Natural killer cell (primary cell): ENCODE measurements at regions of chr1 and their contacts with region 1.

Region 1: GRCh38 chr1:27357281-27358037 is 9.3 kb downstream of the MAP3K6 start:
- DNase-seq: peak; percentile 81 to 91
- ATAC-seq: peak; percentile 70 to 91 (median 75)
- H3K4me3 ChIP-seq: peak overlapping the region; percentile 61
- H3K4me3 Mint-ChIP-seq: peak overlapping the region; percentile 77
- H3K27ac ChIP-seq: peak overlapping the region; percentile 74
- H3K27ac Mint-ChIP-seq: peak overlapping the region; percentile 78 to 84
- H3K4me1 ChIP-seq: peaks cover 50% of the 10 kb centered on the region
- H3K4me1 Mint-ChIP-seq: peaks cover 25 to 41% of the 10 kb centered on the region in 2 donors
- H3K27me3 ChIP-seq: no peaks in the 10 kb centered on the region
- H3K27me3 Mint-ChIP-seq: no peaks in the 10 kb centered on the region
- CTCF ChIP-seq: peak; percentile 99

Region 2: DNA sequence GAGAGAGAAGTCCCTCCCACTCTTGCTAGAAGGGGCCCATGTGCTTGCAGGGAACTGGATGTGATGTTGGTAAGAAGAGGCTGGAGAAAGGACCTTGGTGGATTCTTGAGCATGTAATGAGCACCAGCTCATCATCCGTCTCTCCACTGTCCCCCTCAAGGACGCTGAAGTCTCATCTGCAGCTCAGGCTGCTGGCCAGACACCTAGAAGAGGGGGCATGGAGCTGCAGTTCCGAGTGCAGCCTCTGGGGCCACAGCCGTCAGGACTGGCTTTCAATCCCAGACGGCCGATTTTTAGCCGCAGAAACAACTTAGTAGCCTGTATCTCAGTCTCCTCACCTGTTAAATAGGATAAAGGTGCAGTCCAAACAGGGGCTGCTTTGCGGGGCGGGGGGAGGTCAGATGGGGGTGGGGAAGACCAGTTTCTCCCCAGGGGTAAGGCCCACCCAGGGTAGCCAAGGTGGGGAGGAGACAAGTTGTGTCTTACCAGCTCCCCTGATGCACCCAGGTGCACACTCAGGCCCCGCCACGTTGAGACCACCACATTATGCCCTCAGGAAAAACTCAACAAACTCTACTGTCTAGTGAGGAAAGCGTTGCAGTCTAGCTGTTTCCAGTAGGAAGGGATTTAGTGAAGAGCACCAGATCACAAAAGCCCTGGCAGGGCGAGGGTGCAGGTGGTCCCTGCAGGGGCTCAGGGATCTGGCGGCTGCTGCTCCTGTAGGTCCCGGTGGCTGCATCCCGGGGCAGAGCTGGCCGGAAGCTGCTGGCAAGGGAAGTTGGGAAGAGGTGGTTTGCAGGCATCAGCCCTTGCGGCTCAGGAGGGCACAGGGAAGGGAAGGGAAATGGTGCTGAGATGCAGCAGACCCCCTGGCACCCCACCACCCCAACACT is 1784.5 kb before region 1 on chr1:
- intact Hi-C with region 1: no loop called
- DNase-seq: peak; percentile 44 to 74
- ATAC-seq: peak in 2 of 3 donors; percentile 85 to 86
- H3K4me3 ChIP-seq: no peak overlapping the region
- H3K4me3 Mint-ChIP-seq: no peak overlapping the region
- H3K27ac ChIP-seq: no peak overlapping the region
- H3K27ac Mint-ChIP-seq: no peak overlapping the region
- H3K4me1 ChIP-seq: peaks cover 19% of the 10 kb centered on the region
- H3K4me1 Mint-ChIP-seq: peaks cover 4 to 31% of the 10 kb centered on the region in 2 donors
- H3K27me3 ChIP-seq: no peaks in the 10 kb centered on the region
- H3K27me3 Mint-ChIP-seq: peaks cover 0 to 2% of the 10 kb centered on the region in 2 donors
- CTCF ChIP-seq: peak; percentile 59

Region 3: GRCh38 chr1:27321813-27322577 is 35.5 kb before region 1 on chr1 and contains the start of gene TMEM222:
- intact Hi-C with region 1: loop called (anchors 2 kb)
- DNase-seq: peak; percentile 94 to 98
- ATAC-seq: peak; percentile 96 to 99 (median 97)
- H3K4me3 ChIP-seq: peak within 1 kb of the TSS; percentile 97
- H3K4me3 Mint-ChIP-seq: peak within 1 kb of the TSS; percentile 92
- H3K27ac ChIP-seq: peak within 1 kb of the TSS; percentile 89
- H3K27ac Mint-ChIP-seq: peak within 1 kb of the TSS; percentile 86 to 93
- H3K4me1 ChIP-seq: peaks cover 16% of the 10 kb centered on the region
- H3K4me1 Mint-ChIP-seq: peaks cover 33 to 48% of the 10 kb centered on the region in 2 donors
- H3K27me3 ChIP-seq: no peaks in the 10 kb centered on the region
- H3K27me3 Mint-ChIP-seq: peaks cover 0 to 7% of the 10 kb centered on the region in 2 donors
- CTCF ChIP-seq: no peak
- total RNA-seq, gene TMEM222: 34.9 to 41.2 (median 37.3) TPM

Region 4: GRCh38 chr1:27388337-27389005 is 31.0 kb after region 1 on chr1:
- intact Hi-C with region 1: loop called (anchors 2 kb)
- DNase-seq: peak; percentile 64 to 87
- ATAC-seq: peak in 1 of 3 donors; percentile 17
- H3K4me3 ChIP-seq: no peak overlapping the region
- H3K4me3 Mint-ChIP-seq: no peak overlapping the region
- H3K27ac ChIP-seq: no peak overlapping the region
- H3K27ac Mint-ChIP-seq: peak overlapping the region in 1 of 2 donors; percentile 61
- H3K4me1 ChIP-seq: peaks cover 16% of the 10 kb centered on the region
- H3K4me1 Mint-ChIP-seq: peaks cover 9 to 15% of the 10 kb centered on the region in 2 donors
- H3K27me3 ChIP-seq: no peaks in the 10 kb centered on the region
- H3K27me3 Mint-ChIP-seq: peaks cover 7 to 21% of the 10 kb centered on the region in 2 donors
- CTCF ChIP-seq: peak; percentile 76